ENCODE measurements at regions of chr19 and their contacts with region 1.

Region 1: GRCh38 chr19:2096480-2097329 is at the start of gene IZUMO4:
- DNase-seq: peak; percentile 93 to 99
- H3K4me3 ChIP-seq: peak within 1 kb of the TSS; percentile 75 to 83
- H3K27ac ChIP-seq: peak within 1 kb of the TSS; percentile 94 to 95
- H3K4me1 ChIP-seq: peaks cover 12 to 19% of the 10 kb centered on the region in 2 donors
- H3K27me3 ChIP-seq: no peaks in the 10 kb centered on the region
- CTCF ChIP-seq: peak; percentile 27 to 64 (median 55)
- total RNA-seq, gene IZUMO4: not detected

Region 2: DNA sequence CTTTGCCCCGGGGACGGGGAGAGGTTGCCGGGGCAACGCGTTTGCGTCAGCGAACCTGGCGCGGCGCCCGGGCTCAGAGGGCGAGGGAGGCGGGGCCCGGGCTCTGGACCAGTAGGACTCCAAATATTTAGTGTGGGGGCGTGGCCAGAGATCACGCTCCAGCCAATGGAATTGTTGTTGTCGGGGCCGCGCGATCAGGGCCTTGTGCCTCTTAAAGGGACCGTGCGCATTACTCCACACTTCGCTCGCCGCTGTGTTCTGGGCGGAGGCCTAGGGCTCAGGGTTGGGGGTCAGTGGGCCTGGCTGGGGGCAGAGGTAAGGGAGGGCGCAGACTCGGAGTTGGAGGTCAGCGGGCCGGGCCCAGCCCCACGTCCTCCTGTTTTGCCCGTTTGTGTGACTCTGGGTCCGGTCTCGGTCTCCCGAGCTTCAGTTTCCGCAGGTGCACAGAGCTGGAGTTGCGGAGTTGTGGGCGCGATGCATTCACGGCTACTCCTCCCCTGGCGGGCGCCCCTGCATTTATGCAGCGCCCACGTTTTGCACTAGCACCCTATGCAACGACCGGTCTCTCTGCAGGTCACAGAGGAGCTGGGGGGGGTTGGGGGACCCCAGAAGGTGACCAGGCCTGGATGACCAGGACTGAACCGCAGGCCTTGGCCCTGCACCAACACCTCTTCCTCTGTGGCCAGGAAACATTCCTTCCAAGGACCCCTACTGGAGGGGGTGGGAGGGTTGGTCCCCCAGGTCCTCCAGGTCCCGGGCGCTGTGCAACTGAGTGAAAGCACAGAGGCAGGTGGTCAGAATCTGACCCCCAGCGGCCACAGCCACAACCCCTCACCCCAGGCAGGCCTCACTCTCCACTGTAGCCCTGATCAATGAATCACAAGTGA is 35.0 kb before region 1 on chr19:
- intact Hi-C with region 1: loop called (anchors 2 kb)
- DNase-seq: peak; percentile 97 to 99
- H3K4me3 ChIP-seq: peak overlapping the region; percentile 70 to 85
- H3K27ac ChIP-seq: peak overlapping the region; percentile 98 to 99
- H3K4me1 ChIP-seq: peaks cover 12 to 36% of the 10 kb centered on the region in 2 donors
- H3K27me3 ChIP-seq: no peaks in the 10 kb centered on the region
- CTCF ChIP-seq: no peak

Region 3: GRCh38 chr19:2236314-2237050 is 139.8 kb after region 1 on chr19 and contains the starts of genes PLEKHJ1 and SF3A2:
- intact Hi-C with region 1: loop called (anchors 1 kb)
- DNase-seq: peak; percentile 86 to 98
- H3K4me3 ChIP-seq: peak within 1 kb of the TSS; percentile 85 to 100
- H3K27ac ChIP-seq: peak within 1 kb of the TSS; percentile 97 to 98
- H3K4me1 ChIP-seq: peaks cover 19 to 44% of the 10 kb centered on the region in 2 donors
- H3K27me3 ChIP-seq: no peaks in the 10 kb centered on the region
- CTCF ChIP-seq: peak; percentile 99 to 100 (median 99)
- total RNA-seq, gene PLEKHJ1: 23.9 TPM
- total RNA-seq, gene SF3A2: 21.3 TPM

Region 4: GRCh38 chr19:2328401-2329148 is 231.9 kb after region 1 on chr19 and contains the starts of genes LSM7 and SPPL2B:
- intact Hi-C with region 1: loop called (anchors 1 kb)
- DNase-seq: peak; percentile 76 to 94
- H3K4me3 ChIP-seq: peak within 1 kb of the TSS; percentile 73 to 84
- H3K27ac ChIP-seq: peak within 1 kb of the TSS; percentile 48 to 64
- H3K4me1 ChIP-seq: peaks cover 2 to 34% of the 10 kb centered on the region in 2 donors
- H3K27me3 ChIP-seq: no peaks in the 10 kb centered on the region
- CTCF ChIP-seq: no peak
- total RNA-seq, gene LSM7: 31.4 TPM
- total RNA-seq, gene SPPL2B: 95.7 TPM

Region 5: GRCh38 chr19:2427429-2428320 is 331.0 kb after region 1 on chr19 and contains the start of gene TIMM13:
- intact Hi-C with region 1: no loop called
- DNase-seq: peak; percentile 88 to 98
- H3K4me3 ChIP-seq: peak within 1 kb of the TSS; percentile 69 to 77
- H3K27ac ChIP-seq: peak within 1 kb of the TSS; percentile 86 to 95
- H3K4me1 ChIP-seq: peaks cover 19 to 25% of the 10 kb centered on the region in 2 donors
- H3K27me3 ChIP-seq: no peaks in the 10 kb centered on the region
- CTCF ChIP-seq: no peak
- total RNA-seq, gene TIMM13: 55.0 TPM